ENCODE measurements at regions of chr2 and their contacts with region 1.

Region 1: GRCh38 chr2:152466980-152467676 is 132.2 kb downstream of the FMNL2 start:
- DNase-seq: no peak
- ATAC-seq: peak; percentile 72 to 82 (median 76)
- H3K4me3 ChIP-seq: peak overlapping the region; percentile 52
- H3K27ac ChIP-seq: peak overlapping the region; percentile 92
- H3K4me1 ChIP-seq: peaks cover 92% of the 10 kb centered on the region
- H3K27me3 ChIP-seq: no peaks in the 10 kb centered on the region
- CTCF ChIP-seq: no peak

Region 2: DNA sequence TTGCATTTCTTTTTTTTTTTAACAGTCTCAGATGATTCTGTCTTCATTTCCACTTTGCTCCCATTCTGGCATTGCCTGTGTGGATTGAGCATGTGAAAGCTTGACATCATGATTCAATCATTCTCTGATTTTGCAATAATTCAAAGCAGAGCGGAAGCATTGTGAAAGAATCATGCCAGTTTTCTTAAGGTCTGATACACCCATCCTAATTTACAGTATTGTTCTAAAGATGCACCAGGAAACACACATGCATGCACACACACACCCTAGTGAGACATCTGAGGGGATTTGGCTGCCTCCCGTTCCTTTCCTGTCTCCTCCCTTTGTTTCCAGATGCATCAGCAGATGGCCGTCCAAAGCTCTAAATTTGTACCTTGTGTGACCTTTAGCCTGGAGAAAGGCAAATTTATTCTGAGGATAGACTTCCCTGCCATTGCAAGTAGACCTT is 34.9 kb before region 1 on chr2:
- intact Hi-C with region 1: loop called in 1 of 2 experiments (anchors 5 kb)
- DNase-seq: peak; percentile 34 to 60
- ATAC-seq: peak; percentile 82 to 94 (median 90)
- H3K4me3 ChIP-seq: no peak overlapping the region
- H3K27ac ChIP-seq: peak overlapping the region; percentile 79
- H3K4me1 ChIP-seq: peaks cover 44% of the 10 kb centered on the region
- H3K27me3 ChIP-seq: no peaks in the 10 kb centered on the region
- CTCF ChIP-seq: no peak

Region 3: DNA sequence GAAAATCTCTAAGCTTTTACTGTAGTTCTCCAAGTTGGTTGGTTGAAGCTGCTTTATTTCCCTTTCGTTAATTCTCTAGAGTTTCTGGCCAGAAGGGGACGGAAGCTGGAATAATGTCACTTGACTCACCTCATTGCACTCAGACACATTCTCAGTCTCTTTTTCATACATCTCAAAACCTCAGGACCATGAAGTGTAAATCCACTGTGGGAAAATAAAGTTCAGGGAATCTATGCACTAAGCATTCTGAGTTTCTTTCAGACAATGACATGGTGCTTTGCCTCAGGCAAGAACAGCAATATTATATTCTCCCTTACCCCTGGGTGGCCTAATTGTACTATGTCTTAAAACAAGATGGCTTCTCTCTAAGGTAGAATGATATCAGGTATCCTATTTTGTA is 82.3 kb after region 1 on chr2:
- intact Hi-C with region 1: loop called in 1 of 2 experiments (anchors 5 kb)
- DNase-seq: no peak
- ATAC-seq: no peak
- H3K4me3 ChIP-seq: no peak overlapping the region
- H3K27ac ChIP-seq: no peak overlapping the region
- H3K4me1 ChIP-seq: peaks cover 33% of the 10 kb centered on the region
- H3K27me3 ChIP-seq: no peaks in the 10 kb centered on the region
- CTCF ChIP-seq: no peak

Region 4: DNA sequence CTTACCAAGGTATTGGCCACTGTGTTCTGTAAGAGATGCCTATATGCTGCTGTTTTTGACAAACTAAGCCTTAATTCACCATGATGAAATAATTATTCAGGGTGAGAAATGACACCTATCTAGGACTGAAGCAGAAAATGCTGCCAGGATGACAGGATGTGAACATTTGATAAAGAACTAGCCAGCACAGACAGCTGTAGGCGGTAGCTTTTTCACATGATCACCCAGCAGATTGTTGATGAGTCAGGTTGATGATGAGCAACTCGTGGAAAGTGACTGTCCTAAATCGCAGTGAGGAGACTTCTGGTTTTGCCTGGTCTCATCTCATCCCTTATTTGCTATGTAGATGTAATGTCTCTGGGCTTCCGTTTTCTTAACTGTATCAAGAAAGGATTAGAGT is 106.0 kb after region 1 on chr2:
- intact Hi-C with region 1: no loop called
- DNase-seq: no peak
- ATAC-seq: peak; percentile 85 to 88 (median 87)
- H3K4me3 ChIP-seq: no peak overlapping the region
- H3K27ac ChIP-seq: peak overlapping the region; percentile 83
- H3K4me1 ChIP-seq: peaks cover 36% of the 10 kb centered on the region
- H3K27me3 ChIP-seq: no peaks in the 10 kb centered on the region
- CTCF ChIP-seq: no peak

Measured in psoas muscle (tissue), 8 donors.